K562 (cell line): ENCODE measurements at regions of chr12 and their contacts with region 1.

Region 1: DNA sequence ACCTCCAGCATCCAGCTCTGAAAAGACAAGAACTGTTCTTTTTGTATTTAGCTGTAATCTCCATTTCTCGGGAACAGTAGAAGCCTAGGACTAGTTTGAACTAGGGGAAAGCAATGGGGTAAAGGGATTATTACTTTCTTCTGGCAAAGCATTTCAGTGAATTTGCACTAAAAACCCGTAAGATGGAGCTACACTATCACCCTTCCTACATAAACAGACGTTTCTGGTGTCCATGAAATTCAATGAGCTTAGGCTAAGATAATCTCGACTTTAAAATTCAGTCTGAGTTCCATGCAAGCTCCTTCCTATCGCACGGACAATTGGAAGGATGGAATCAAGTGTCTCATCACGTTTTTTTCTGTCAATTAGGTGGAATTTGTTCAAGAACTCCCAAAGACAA is 24.0 kb downstream of the ACSM4 start:
- DNase-seq: no peak
- ATAC-seq: no peak
- H3K4me3 ChIP-seq: no peak overlapping the region
- H3K27ac ChIP-seq: no peak overlapping the region
- H3K4me1 ChIP-seq: no peaks in the 10 kb centered on the region
- H3K27me3 ChIP-seq: no peaks in the 10 kb centered on the region
- CTCF ChIP-seq: peak in 2 of 3 experiments; percentile 27 to 48; a peak in 2 of 6 replicates
- EP300 ChIP-seq: no peak
- POLR2A ChIP-seq: no peak
- RAD21 ChIP-seq: peak; percentile 54 to 66

Region 2: GRCh38 chr12:7210642-7211151 is 117.2 kb before region 1 on chr12:
- CTCF ChIA-PET with region 1: no interaction called
- POLR2A ChIA-PET with region 1: no interaction called
- in situ Hi-C with region 1: no loop called
- intact Hi-C with region 1: no loop called
- DNase-seq: no peak
- ATAC-seq: no peak
- H3K4me3 ChIP-seq: no peak overlapping the region
- H3K27ac ChIP-seq: no peak overlapping the region
- H3K4me1 ChIP-seq: no peaks in the 10 kb centered on the region
- H3K27me3 ChIP-seq: no peaks in the 10 kb centered on the region
- CTCF ChIP-seq: no peak
- EP300 ChIP-seq: no peak
- POLR2A ChIP-seq: no peak
- RAD21 ChIP-seq: no peak

Region 3: GRCh38 chr12:7310070-7310469 is 17.8 kb before region 1 on chr12:
- CTCF ChIA-PET with region 1: no interaction called
- POLR2A ChIA-PET with region 1: no interaction called
- in situ Hi-C with region 1: no loop called
- intact Hi-C with region 1: no loop called
- DNase-seq: no peak
- ATAC-seq: no peak
- H3K4me3 ChIP-seq: no peak overlapping the region
- H3K27ac ChIP-seq: no peak overlapping the region
- H3K4me1 ChIP-seq: no peaks in the 10 kb centered on the region
- H3K27me3 ChIP-seq: no peaks in the 10 kb centered on the region
- CTCF ChIP-seq: no peak
- EP300 ChIP-seq: no peak
- POLR2A ChIP-seq: no peak
- RAD21 ChIP-seq: no peak

Region 4: DNA sequence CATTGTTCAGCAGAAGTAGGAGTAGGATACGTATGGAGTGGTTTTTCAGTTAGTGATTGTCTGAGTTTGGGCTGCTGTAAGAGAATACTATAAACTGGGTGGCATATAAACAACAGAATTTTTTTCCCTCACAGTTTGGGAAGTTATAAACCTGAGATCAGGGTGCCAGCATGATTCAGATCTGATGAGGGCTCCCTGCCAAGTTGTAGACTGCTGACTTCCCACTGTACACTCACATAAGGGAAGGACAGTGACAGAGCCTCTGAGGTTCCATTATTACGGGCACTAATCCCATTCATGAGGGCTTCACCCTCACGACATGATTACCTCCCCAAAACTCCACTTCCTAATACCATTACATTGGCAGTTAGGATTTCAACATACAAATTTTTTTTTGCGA is 26.6 kb after region 1 on chr12:
- CTCF ChIA-PET with region 1: no interaction called
- POLR2A ChIA-PET with region 1: no interaction called
- in situ Hi-C with region 1: no loop called
- intact Hi-C with region 1: no loop called
- DNase-seq: no peak
- ATAC-seq: no peak
- H3K4me3 ChIP-seq: no peak overlapping the region
- H3K27ac ChIP-seq: no peak overlapping the region
- H3K4me1 ChIP-seq: peaks cover 0 to 6% of the 10 kb centered on the region in 2 experiments; a peak in 2 of 5 replicates
- H3K27me3 ChIP-seq: no peaks in the 10 kb centered on the region
- CTCF ChIP-seq: no peak
- EP300 ChIP-seq: no peak
- POLR2A ChIP-seq: no peak
- RAD21 ChIP-seq: no peak

Region 5: DNA sequence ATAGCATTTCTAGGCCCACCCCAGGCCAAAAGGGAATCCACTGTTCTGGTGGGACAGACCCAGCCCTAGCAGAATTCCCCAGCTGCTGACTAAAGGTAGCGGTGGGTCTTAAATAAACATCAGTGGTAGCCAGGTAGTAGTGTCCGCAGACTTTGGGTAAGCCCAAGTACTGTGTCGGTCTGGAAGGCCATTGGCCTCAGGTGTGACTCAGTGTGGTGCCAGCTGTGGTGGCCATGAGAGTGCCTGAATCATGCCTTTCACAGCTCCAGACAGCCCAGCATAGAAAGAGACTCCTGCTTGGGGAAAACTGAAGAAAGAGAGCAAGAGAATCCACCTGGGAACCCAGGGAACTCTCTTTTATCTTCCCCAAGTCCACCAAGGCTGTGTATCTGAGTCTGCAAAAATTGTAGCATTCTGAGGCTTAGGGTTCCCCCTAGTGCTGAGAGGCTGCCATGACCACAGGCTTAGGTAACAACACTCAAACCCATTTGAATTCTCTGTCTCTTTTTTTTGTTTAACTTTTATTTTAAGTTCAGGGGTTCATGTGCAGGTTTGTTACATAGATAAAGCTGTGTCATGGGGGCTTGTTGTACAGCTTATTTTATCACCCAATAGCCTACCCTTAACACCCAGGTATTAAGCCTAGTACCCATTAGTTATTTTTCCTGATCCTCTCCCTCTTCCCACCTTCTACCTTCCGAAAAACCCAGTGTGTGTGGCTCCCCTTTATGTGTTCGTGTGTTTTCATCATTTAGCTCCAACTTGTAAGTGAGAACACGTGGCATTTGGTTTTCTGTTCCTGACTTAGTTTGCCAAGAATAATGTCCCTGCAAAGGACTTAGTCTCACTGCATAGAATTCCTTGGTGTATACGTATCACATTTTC is 132.7 kb after region 1 on chr12:
- CTCF ChIA-PET with region 1: no interaction called
- POLR2A ChIA-PET with region 1: no interaction called
- in situ Hi-C with region 1: no loop called
- intact Hi-C with region 1: loop called (anchors 2 kb)
- DNase-seq: peak; percentile 48 to 66 (median 53)
- ATAC-seq: peak; percentile 92
- H3K4me3 ChIP-seq: no peak overlapping the region
- H3K27ac ChIP-seq: no peak overlapping the region
- H3K4me1 ChIP-seq: no peaks in the 10 kb centered on the region
- H3K27me3 ChIP-seq: no peaks in the 10 kb centered on the region; a peak in 1 of 5 replicates
- CTCF ChIP-seq: peak; percentile 72 to 91 (median 73); a peak in 5 of 6 replicates
- EP300 ChIP-seq: no peak
- POLR2A ChIP-seq: no peak
- RAD21 ChIP-seq: peak; percentile 90 to 96